Ovary (tissue), 10 donors: ENCODE measurements at regions of chr20 and their contacts with region 1.

Region 1: GRCh38 chr20:38559764-38560163 is 21.2 kb upstream of the ADIG start:
- DNase-seq: no peak
- H3K4me3 ChIP-seq: no peak overlapping the region
- H3K27ac ChIP-seq: no peak overlapping the region
- H3K4me1 ChIP-seq: no peaks in the 10 kb centered on the region
- H3K27me3 ChIP-seq: no peaks in the 10 kb centered on the region
- CTCF ChIP-seq: no peak
- EP300 ChIP-seq: no peak
- POLR2A ChIP-seq: no peak

Region 2: DNA sequence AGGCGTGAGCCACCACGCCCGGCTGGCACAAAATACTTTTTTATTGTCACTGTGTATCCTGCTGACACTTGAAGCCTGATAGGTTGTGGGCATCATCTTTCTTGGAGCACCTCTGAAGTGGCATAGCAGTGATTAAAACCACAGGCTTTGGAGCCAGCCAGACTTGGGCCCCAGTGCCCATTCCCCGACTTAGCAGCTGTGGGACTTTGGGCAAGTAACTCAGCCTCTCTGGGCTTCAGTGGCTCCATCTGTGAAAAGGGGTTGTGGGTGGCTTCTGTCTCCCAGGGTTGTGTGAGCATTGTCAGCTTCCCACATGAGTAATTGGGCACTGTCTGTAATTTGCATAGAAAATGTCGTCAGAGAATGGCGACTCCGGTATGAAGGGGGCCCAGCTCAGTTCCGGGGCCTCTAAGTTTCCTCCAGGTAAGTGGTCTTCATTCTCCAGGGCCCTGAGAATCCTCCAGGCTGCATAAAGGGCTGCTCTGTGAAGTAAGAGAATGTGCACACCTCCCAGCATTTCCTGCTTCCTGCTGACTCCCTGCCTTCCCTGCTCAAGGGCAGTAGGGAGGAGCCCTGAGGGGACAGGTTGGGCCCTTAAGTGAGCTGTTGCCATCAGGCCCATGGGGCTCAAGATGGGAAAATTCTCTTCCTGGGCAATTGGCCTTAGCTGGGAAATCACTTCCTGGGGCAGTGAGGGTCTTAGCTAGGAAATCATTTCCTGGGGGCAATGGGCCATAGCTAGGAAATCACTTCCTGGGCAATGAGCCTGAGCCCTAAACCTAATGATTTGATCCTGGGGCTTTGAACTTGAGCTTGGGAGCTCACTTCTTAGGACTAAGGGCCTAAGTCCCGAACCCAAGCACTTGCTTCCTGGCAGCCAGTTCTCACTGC is 69.1 kb after region 1 on chr20:
- intact Hi-C with region 1: loop called in 1 of 4 experiments (anchors 10 kb)
- DNase-seq: no peak
- H3K4me3 ChIP-seq: no peak overlapping the region
- H3K27ac ChIP-seq: no peak overlapping the region
- H3K4me1 ChIP-seq: no peaks in the 10 kb centered on the region
- H3K27me3 ChIP-seq: no peaks in the 10 kb centered on the region
- CTCF ChIP-seq: no peak
- EP300 ChIP-seq: no peak
- POLR2A ChIP-seq: no peak